ENCODE measurements at regions of chr3 and their contacts with region 1.

Region 1: DNA sequence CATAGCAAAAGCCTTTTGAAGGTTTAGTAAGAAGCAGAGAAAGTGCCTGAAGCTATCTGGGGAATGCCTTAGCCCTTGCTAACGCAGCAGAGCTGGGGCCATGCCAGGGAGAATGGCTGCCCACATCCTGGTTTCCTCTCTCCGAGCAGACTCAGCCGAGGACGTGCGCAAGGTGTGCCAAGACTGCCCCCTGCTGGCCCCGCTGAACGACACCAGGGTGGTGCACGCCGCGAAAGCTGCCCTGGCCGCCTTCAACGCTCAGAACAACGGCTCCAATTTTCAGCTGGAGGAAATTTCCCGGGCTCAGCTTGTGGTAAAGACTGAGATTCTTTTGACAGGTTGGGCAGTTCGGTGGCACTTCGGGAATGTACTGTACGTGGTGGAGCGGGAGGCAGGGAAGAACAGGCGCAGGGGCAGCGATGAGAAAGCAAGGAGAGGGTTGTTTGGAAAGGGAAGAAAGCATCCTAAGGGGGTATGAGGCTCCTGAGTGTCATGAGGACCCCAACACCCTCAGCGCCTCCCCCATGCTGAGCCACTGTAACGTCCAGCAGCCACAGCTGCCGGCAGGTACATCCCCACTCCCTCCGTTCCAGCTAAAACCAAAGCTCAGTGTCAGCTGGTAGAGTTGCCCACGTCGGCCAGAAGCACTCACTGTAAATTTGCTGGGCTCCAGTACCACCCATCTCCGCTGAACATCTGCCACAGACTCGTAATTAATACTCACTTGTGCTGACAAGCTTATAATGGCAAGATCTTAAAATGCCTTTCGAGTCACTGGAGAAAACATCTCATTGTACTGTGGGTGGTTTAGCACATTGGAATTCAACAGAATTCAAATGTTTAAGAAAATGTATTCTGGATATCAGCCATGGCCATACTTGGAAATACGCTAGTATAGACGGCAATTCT is 4.4 kb downstream of the AHSG start:
- DNase-seq: peak; percentile 66
- ATAC-seq: peak; percentile 98
- H3K4me3 ChIP-seq: peak overlapping the region; percentile 41 to 55
- H3K27ac ChIP-seq: no peak overlapping the region
- H3K4me1 ChIP-seq: peaks cover 2 to 21% of the 10 kb centered on the region in 2 experiments; a peak in 2 of 4 replicates
- H3K27me3 ChIP-seq: no peaks in the 10 kb centered on the region
- CTCF ChIP-seq: peak; percentile 77 to 94 (median 91)
- POLR2A ChIP-seq: no peak
- RAD21 ChIP-seq: peak; percentile 94

Region 2: DNA sequence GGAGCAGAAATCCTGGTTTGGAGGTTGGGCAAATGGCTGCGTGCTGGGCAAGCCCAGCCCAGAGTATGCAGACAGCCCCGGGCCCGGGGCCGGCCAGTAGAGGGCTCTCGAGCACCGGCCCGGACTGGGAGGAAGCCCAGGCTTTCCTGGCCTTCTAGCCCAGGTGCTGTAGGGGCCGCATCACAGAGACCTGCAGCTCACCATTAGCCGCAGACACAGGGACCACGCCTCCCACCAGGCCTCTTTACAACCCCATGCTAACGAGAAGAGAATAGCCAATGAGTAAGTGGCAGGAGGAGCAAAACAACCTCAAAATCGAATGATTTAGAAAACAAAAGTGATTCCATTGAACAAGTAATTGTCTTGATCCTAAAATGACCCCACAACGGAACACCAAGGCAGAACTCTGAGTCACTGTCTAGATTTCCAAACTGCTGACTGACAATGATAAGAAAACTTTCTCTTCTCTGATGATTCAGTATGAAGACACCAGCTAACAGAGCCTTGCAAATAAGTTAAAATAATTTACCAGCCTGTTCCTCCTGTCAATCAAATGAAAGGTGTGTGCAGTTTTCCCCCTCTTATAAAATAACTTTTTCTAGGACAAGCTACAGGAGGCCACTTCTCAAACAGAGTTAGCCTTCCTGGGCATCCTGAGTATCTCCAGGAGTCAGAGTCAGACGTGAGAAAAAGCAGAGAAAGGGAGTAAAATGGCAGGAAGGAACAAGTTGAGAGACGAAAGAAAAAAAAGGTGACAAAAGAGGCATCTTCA is 357.5 kb before region 1 on chr3:
- CTCF ChIA-PET with region 1: interaction called, 13 read pairs
- POLR2A ChIA-PET with region 1: no interaction called
- RAD21 ChIA-PET with region 1: no interaction called
- intact Hi-C with region 1: loop called (anchors 5 kb)
- DNase-seq: peak; percentile 75
- ATAC-seq: peak; percentile 100
- H3K4me3 ChIP-seq: no peak overlapping the region
- H3K27ac ChIP-seq: no peak overlapping the region
- H3K4me1 ChIP-seq: peaks cover 5 to 12% of the 10 kb centered on the region in 2 experiments; a peak in 3 of 4 replicates
- H3K27me3 ChIP-seq: no peaks in the 10 kb centered on the region
- CTCF ChIP-seq: peak; percentile 88 to 99 (median 96)
- POLR2A ChIP-seq: no peak
- RAD21 ChIP-seq: peak; percentile 90

Region 3: DNA sequence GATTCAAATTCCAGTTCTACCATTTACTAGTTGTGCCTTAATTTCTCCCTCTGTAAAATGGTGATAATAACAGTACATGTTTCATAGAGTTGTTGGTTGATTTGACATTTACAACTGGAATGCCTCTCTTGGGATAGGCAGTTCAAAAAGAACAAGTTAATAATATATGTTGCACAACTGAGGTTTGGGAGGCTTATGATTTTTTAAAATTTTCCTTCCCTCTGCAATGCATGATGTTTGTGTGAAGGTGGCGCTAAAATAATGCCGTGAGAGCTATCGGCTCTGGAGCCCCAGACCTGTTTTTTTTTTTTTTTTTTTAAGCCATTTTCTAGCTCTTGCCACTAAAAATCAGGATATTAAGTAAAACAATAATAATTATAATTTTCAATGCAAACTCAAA is 28.2 kb before region 1 on chr3:
- CTCF ChIA-PET with region 1: interaction called, 14 read pairs
- POLR2A ChIA-PET with region 1: no interaction called
- RAD21 ChIA-PET with region 1: interaction called in 1 of 2 experiments, 3 read pairs
- intact Hi-C with region 1: no loop called
- DNase-seq: no peak
- ATAC-seq: peak; percentile 68
- H3K4me3 ChIP-seq: 0 out of 4 replicates have a peak overlapping the region, but pooled peaks of 1 of the 2 experiments have one; percentile 1
- H3K27ac ChIP-seq: no peak overlapping the region
- H3K4me1 ChIP-seq: peaks cover 16 to 24% of the 10 kb centered on the region in 2 experiments
- H3K27me3 ChIP-seq: no peaks in the 10 kb centered on the region
- CTCF ChIP-seq: peak; percentile 44 to 59 (median 59); a peak in 5 of 6 replicates
- POLR2A ChIP-seq: no peak
- RAD21 ChIP-seq: peak; percentile 74

Region 4: DNA sequence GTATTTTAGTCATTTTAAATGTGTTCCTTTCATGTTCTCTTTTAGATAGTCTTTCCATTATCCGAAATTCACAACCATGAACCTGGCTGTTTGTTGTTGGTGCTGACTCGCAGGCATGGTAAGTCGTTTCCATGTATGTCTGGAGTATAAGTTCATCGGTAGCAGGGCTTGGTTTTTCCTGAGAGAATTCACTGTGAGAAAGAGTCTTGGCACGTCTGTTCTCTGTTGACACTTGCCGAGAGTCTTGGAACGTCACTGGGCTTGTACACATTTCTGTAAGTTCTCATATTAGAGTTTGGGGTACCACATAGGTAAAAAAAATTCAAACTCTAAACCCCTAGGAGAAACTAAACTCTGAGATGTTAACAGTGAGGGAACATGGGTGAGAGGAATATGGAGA is 136.7 kb after region 1 on chr3:
- CTCF ChIA-PET with region 1: interaction called, 8 read pairs
- POLR2A ChIA-PET with region 1: interaction called, 3 read pairs
- RAD21 ChIA-PET with region 1: interaction called in 1 of 2 experiments, 5 read pairs
- intact Hi-C with region 1: loop called (anchors 1 kb)
- DNase-seq: no peak
- ATAC-seq: no peak
- H3K4me3 ChIP-seq: no peak overlapping the region
- H3K27ac ChIP-seq: no peak overlapping the region
- H3K4me1 ChIP-seq: peaks cover 0 to 25% of the 10 kb centered on the region in 2 experiments; a peak in 2 of 4 replicates
- H3K27me3 ChIP-seq: no peaks in the 10 kb centered on the region
- CTCF ChIP-seq: no peak
- POLR2A ChIP-seq: no peak
- RAD21 ChIP-seq: no peak

Region 5: DNA sequence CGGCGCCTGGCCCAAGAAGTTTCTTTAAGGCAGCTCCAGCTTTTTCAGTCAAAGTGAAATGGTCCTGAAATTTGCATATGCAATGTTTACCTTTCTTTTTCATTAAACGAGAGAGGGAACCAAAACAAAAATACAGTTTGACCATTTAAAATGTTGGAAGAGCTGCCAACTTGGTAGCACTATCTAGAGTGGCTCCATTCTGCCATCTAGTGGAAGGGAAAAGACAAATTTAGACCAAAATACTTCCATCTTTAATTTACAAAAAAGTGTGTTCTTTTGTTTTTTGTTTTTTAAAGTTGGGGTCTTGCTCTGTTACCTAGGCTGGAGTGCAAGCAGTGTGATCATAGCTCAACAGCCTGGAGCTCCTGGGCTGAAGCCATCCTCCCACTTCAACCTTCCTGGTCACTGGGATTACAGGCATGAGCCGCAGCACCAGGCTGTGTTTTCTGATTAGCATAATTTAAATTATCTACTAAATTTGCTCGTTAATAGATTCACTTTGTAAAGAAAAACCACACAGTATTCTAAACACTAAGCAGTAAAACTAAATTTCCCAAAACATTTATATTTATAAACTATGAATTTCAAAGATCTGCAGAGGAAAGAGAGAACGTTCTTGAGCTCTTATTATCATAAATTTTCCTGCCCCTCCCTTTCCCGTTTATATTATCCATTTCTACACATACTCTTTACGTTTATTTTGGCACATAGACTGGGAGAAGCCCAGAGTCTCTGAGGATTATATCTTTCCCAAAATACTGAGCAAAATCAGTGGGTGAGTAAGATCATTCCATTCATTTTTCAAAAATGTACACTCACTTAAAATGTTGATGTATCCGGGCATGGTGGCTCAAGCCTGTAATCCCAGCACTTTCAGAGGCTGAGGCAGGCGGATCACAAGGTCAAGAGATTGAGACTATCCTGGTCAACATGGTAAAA is 204.4 kb after region 1 on chr3:
- CTCF ChIA-PET with region 1: interaction called, 64 read pairs
- POLR2A ChIA-PET with region 1: interaction called, 3 read pairs
- RAD21 ChIA-PET with region 1: interaction called, 3 to 4 read pairs
- intact Hi-C with region 1: loop called (anchors 1 kb)
- DNase-seq: peak; percentile 36
- ATAC-seq: peak; percentile 41
- H3K4me3 ChIP-seq: no peak overlapping the region
- H3K27ac ChIP-seq: no peak overlapping the region
- H3K4me1 ChIP-seq: peaks cover 4 to 9% of the 10 kb centered on the region in 2 experiments; a peak in 2 of 4 replicates
- H3K27me3 ChIP-seq: no peaks in the 10 kb centered on the region
- CTCF ChIP-seq: peak; percentile 63 to 86 (median 76)
- POLR2A ChIP-seq: no peak
- RAD21 ChIP-seq: peak; percentile 89